Activated B cell treated with CpG ODN at 0.5 μM for 24 hours (primary cell): ENCODE measurements at regions of chr11 and their contacts with region 1.

Region 1: GRCh38 chr11:65497141-65498041 is 1.5 kb upstream of the MALAT1 start:
- DNase-seq: peak; percentile 98
- ATAC-seq: peak; percentile 74
- H3K4me3 Mint-ChIP-seq: no peak overlapping the region
- H3K27ac Mint-ChIP-seq: no peak overlapping the region
- H3K4me1 Mint-ChIP-seq: peaks cover 53% of the 10 kb centered on the region
- H3K27me3 Mint-ChIP-seq: no peaks in the 10 kb centered on the region
- CTCF ChIP-seq: no peak

Region 2: DNA sequence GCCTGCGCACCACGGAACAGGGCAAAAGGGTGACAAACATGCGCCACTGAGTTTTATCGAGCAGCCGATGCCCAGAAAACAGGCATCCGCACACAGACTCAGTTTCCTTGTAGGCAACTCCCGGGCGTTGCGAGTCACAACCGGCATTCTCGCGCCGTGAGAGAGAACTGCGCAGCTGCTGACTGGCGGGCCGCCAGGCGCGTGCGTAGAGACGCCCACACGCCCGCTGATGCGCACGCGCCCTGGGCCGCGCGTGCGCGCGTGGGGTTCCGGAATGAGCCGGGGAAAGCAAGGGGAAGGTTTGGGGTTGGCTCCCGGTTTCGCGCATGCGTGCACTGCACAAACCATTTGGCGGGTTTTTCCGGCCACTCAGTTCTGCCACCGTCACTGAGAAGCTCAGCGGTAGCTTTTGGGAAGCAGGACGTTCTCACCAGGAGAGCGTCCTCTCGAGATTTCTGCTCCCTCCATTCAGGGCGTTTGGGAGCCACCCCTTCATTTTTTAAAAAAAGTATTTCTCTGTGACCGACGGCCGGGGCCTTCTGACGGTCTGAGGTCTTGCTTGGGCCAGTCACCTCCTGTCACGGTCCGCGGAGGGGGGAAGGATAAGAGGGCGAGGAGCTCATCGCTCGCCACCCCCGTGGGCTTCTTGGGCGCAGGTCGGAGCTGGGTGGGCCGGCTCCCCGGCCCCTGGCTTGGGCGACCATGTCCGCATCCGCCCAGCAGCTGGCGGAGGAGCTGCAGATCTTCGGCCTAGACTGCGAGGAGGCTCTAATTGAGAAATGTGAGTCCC is 235.6 kb before region 1 on chr11 and contains the start of gene POLA2:
- CTCF ChIA-PET with region 1: no interaction called
- POLR2A ChIA-PET with region 1: interaction called, 12 read pairs
- intact Hi-C with region 1: no loop called
- DNase-seq: peak; percentile 98
- ATAC-seq: peak; percentile 83
- H3K4me3 Mint-ChIP-seq: peak within 1 kb of the TSS; percentile 90
- H3K27ac Mint-ChIP-seq: peak within 1 kb of the TSS; percentile 91
- H3K4me1 Mint-ChIP-seq: peaks cover 27% of the 10 kb centered on the region
- H3K27me3 Mint-ChIP-seq: no peaks in the 10 kb centered on the region
- CTCF ChIP-seq: no peak
- total RNA-seq, gene POLA2: 37.1 and 43.4 TPM in 2 replicates

Region 3: DNA sequence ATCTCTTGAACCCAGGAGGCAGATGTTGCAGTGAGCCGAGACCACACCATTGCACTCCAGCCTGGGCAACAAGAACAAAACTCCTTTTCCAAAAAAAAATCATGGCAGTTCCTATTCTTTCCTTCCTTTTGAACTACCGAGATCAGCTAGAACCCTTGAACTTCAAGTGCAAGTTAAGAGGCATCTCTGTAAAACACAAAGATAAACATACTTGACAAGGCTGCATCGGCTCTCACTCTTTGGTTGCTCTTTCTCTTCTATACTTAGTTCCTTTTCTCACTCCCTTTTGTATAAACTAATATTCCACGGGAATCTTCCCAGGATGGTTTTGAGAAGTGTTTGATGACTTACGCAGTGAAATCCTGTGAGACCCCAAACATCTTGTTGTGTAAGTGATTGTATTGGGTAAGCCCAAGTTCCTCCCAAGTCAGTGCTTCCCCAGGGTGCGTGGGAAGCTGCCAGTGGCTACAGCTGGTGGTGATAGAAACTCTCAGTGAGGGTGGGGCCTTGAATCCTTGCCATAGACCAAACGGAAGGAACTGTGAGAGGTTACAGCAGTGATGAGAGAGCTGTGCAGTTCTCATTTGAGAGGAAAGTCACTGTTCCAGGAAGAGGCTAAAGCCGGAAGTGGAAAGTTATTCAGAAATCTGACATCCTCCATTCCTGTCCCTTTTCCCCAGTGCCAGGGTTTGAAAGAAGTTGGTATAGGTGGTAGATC is 206.8 kb before region 1 on chr11:
- CTCF ChIA-PET with region 1: no interaction called
- POLR2A ChIA-PET with region 1: no interaction called
- intact Hi-C with region 1: no loop called
- DNase-seq: no peak
- ATAC-seq: no peak
- H3K4me3 Mint-ChIP-seq: no peak overlapping the region
- H3K27ac Mint-ChIP-seq: no peak overlapping the region
- H3K4me1 Mint-ChIP-seq: no peaks in the 10 kb centered on the region
- H3K27me3 Mint-ChIP-seq: no peaks in the 10 kb centered on the region
- CTCF ChIP-seq: no peak

Region 4: DNA sequence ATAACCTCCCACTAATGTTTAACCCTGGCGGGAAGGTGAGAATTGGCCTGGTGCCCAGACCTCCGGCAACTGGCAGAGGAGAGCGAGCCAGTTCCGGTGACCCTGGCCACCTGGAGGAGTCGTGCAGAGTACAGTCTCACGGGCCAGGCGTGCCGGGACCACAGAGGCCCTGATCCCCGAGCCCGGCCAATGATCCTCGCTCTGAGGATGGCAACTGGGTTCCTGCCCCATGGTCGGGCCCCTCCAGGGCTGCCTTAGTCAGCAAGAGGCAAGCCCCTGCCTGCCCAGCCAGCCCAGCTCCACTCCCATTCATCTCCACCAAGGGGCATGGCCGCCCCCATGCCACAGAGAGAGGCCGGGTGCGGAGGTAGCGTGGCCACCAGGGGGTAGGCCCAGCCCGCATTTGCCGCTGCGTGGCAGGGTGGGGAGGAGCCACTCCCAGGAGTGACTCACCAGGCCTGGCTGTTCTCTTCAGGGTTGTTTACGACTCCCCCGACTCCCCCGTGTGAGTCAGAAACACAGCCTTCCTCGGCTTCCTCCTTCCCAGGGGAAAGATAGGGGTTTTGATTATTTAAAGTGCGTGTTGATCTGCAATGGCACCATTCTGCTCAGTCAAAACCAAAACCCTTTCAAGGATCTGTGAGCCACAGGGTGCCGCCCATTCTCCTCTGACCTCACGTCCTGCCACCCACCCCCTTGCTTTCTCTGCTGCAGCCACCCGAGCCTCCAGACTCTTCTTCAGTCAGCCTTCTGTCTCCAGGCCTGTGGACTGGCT is 115.2 kb before region 1 on chr11 and contains the start of gene SLC25A45:
- CTCF ChIA-PET with region 1: interaction called, 10 read pairs
- POLR2A ChIA-PET with region 1: interaction called, 584 read pairs
- intact Hi-C with region 1: loop called (anchors 1 kb)
- DNase-seq: peak; percentile 84
- ATAC-seq: peak; percentile 84
- H3K4me3 Mint-ChIP-seq: peak within 1 kb of the TSS; percentile 82
- H3K27ac Mint-ChIP-seq: peak within 1 kb of the TSS; percentile 94
- H3K4me1 Mint-ChIP-seq: peaks cover 67% of the 10 kb centered on the region
- H3K27me3 Mint-ChIP-seq: no peaks in the 10 kb centered on the region
- CTCF ChIP-seq: no peak
- total RNA-seq, gene SLC25A45: 11.4 and 12.3 TPM in 2 replicates

Region 5: DNA sequence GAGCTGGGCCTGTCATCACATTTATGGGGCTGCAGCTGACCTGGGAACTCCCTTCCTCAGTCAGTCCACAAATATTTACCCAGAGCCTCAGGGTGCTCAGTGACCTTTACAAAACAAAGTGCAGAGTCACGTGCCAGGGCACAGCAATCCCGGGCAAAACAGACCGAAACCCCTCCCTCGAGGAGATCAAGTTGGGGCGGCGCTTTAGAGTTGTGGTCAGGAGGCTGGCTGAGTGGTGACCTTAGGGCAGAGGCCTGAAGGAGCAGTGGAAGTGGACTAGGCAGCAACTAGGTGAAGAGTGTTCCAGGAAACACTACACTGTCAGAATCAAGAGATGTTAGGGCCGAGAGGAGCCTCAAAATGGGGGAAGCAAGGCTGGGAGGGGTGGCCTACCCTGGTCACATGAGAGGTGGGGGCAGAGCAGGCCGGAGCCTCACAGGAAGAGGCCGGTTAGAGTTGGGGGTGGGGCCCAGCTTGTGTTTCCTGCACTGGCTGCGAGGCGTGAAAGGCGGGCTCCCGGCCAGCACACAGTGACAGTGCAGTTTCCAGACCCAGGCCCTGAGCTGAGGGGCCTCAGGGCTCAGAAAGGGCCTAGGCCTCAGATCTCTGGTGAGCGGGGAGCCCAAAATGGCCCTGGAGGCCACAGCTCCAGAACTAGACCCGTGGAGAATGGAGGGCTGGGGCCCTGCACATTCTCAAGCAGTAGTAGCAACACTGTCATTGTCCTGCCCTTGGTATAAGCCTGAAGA is 78.5 kb before region 1 on chr11:
- CTCF ChIA-PET with region 1: interaction called, 289 read pairs
- POLR2A ChIA-PET with region 1: interaction called, 3,752 read pairs
- intact Hi-C with region 1: loop called (anchors 1 kb)
- DNase-seq: peak; percentile 87
- ATAC-seq: peak; percentile 50
- H3K4me3 Mint-ChIP-seq: peak overlapping the region; percentile 87
- H3K27ac Mint-ChIP-seq: peak overlapping the region; percentile 100
- H3K4me1 Mint-ChIP-seq: peaks cover 71% of the 10 kb centered on the region
- H3K27me3 Mint-ChIP-seq: no peaks in the 10 kb centered on the region
- CTCF ChIP-seq: no peak

Region 6: GRCh38 chr11:65440831-65441499 is 56.4 kb before region 1 on chr11:
- CTCF ChIA-PET with region 1: interaction called, 3 read pairs
- POLR2A ChIA-PET with region 1: interaction called, 535 read pairs
- intact Hi-C with region 1: loop called (anchors 1 kb)
- DNase-seq: no peak
- ATAC-seq: peak; percentile 38
- H3K4me3 Mint-ChIP-seq: peak overlapping the region; percentile 77
- H3K27ac Mint-ChIP-seq: peak overlapping the region; percentile 92
- H3K4me1 Mint-ChIP-seq: peaks cover 70% of the 10 kb centered on the region
- H3K27me3 Mint-ChIP-seq: no peaks in the 10 kb centered on the region
- CTCF ChIP-seq: no peak

Region 7: DNA sequence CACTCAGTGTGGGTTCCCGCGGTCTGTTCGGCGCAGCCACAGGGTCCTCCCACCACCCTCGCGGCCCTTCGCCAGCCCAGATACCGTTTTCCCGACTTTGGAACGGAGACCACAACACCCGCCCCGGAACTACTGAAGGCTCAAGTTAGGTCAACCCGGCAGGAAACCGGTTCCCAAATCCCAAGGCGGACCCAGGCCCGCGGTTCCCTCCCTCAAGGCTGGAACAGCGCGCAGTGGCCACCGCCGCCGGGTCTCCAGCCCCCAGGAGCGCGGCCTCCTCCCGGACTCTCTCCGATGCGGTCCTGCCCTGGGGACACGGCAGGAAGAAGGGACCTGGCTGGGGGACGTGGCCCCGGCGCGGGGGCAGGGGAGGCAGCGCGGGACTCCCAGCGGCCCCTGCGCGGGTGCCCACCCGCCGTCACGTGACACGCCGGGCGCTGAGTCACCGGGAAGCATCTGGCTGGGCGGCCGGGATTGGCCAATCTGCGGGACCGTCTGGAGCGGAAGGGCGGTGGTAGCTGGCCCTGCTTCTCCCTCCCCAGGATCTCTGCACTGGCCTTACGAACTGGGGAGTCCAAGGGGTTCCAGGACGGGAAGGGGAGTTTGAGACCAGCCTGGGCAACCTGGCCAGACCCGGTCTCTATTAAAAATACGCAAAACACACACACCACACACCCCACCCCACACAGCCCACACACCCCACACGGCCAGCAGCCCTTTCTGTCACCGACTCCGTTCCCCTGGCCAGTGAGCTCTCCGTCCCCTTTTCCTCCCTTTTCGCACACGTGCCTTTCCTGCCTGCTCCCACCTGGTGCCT is 20.0 kb before region 1 on chr11:
- CTCF ChIA-PET with region 1: interaction called, 18 read pairs
- POLR2A ChIA-PET with region 1: interaction called, 1,949 read pairs
- intact Hi-C with region 1: loop called (anchors 1 kb)
- DNase-seq: peak; percentile 92
- ATAC-seq: peak; percentile 86
- H3K4me3 Mint-ChIP-seq: peak overlapping the region; percentile 96
- H3K27ac Mint-ChIP-seq: peak overlapping the region; percentile 99
- H3K4me1 Mint-ChIP-seq: peaks cover 24% of the 10 kb centered on the region
- H3K27me3 Mint-ChIP-seq: no peaks in the 10 kb centered on the region
- CTCF ChIP-seq: no peak

Region 8: GRCh38 chr11:65588199-65589054 is 91.0 kb after region 1 on chr11:
- CTCF ChIA-PET with region 1: no interaction called
- POLR2A ChIA-PET with region 1: interaction called, 21 read pairs
- intact Hi-C with region 1: no loop called
- DNase-seq: peak; percentile 76
- ATAC-seq: peak; percentile 80
- H3K4me3 Mint-ChIP-seq: peak overlapping the region; percentile 70
- H3K27ac Mint-ChIP-seq: peak overlapping the region; percentile 96
- H3K4me1 Mint-ChIP-seq: peaks cover 44% of the 10 kb centered on the region
- H3K27me3 Mint-ChIP-seq: no peaks in the 10 kb centered on the region
- CTCF ChIP-seq: peak; percentile 38